Activated naive CD4-positive, alpha-beta T cell treated with anti-CD3 and anti-CD28 coated beads for 36 hours (primary cell): ENCODE measurements at regions of chr1 and their contacts with region 1.

Region 1: GRCh38 chr1:110370827-110371226 is 20.0 kb downstream of the SLC16A4 start:
- DNase-seq: peak; percentile 31
- H3K4me3 Mint-ChIP-seq: no peak overlapping the region
- H3K27ac Mint-ChIP-seq: no peak overlapping the region
- H3K4me1 Mint-ChIP-seq: peaks cover 16% of the 10 kb centered on the region
- H3K27me3 Mint-ChIP-seq: no peaks in the 10 kb centered on the region

Region 2: DNA sequence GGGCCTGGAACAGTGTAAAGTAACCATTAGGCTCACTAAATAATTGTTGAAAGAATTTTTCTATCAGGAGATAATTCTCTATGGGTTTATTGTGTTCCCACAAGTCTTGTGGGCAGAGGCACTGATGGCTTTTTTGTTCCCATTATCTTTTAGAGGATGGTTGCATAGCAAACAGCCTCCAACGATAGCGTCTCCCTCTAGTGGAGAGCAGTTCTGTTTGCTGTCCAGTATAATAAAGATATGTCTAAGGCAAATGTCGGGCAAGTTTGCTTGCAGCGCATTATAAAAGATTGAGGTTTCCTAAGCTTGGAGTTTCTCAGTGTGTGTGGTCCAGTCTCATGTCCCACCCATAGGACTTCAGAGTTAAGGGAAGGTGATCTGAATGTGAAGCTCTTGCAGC is 221.9 kb before region 1 on chr1:
- CTCF ChIA-PET with region 1: no interaction called
- intact Hi-C with region 1: no loop called
- DNase-seq: no peak
- H3K4me3 Mint-ChIP-seq: no peak overlapping the region
- H3K27ac Mint-ChIP-seq: no peak overlapping the region
- H3K4me1 Mint-ChIP-seq: peaks cover 2% of the 10 kb centered on the region
- H3K27me3 Mint-ChIP-seq: peaks cover 41% of the 10 kb centered on the region

Region 3: DNA sequence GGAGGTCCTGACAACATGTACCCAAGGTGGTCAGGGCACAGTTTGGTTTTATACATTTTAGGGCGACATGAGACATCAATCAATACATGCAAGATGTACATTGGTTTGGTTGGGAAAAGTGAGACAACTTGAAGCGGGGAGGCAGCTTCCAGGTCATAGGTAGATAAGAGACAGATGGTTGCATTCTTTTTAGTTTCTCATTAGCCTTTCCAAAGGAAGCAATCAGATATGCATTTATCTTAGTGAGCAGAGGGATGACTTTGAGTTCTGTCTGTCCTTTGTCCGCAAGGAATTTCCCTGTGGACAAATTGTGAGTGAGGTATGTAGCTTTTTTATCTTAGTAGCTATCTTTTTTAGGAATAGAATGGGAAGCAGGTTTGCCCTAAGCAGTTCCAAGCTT is 42.1 kb before region 1 on chr1:
- CTCF ChIA-PET with region 1: no interaction called
- intact Hi-C with region 1: no loop called
- DNase-seq: no peak
- H3K4me3 Mint-ChIP-seq: no peak overlapping the region
- H3K27ac Mint-ChIP-seq: no peak overlapping the region
- H3K4me1 Mint-ChIP-seq: no peaks in the 10 kb centered on the region
- H3K27me3 Mint-ChIP-seq: no peaks in the 10 kb centered on the region

Region 4: GRCh38 chr1:110407260-110408210 is 36.7 kb after region 1 on chr1 and contains the start of gene LAMTOR5:
- CTCF ChIA-PET with region 1: interaction called, 3 read pairs
- intact Hi-C with region 1: loop called (anchors 5 kb)
- DNase-seq: peak; percentile 96
- H3K4me3 Mint-ChIP-seq: peak within 1 kb of the TSS; percentile 99
- H3K27ac Mint-ChIP-seq: peak within 1 kb of the TSS; percentile 96
- H3K4me1 Mint-ChIP-seq: peaks cover 15% of the 10 kb centered on the region
- H3K27me3 Mint-ChIP-seq: no peaks in the 10 kb centered on the region
- total RNA-seq, gene LAMTOR5: 138 to 144 TPM